ENCODE measurements at regions of chr20 and their contacts with region 1.

Region 1: DNA sequence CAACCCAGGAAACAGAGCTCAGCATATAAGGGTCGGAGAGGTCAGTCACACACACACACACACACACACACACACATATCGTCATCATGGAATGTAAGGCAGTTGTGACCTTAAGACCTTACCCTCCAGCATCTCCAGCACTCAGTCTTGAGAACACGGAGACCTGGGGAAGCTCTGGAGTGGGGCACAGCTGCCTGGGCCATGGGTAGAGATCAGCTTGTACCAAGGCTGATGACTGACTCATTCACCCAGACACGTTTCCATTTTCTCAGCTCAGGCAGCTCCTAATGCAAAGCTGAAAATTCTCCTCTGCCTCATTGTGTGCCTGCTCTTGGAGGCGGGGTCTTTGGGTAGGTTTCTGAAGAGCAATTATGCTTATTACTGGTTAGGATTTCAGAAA is 38.3 kb upstream of the PDYN start:
- DNase-seq: no peak

Region 2: DNA sequence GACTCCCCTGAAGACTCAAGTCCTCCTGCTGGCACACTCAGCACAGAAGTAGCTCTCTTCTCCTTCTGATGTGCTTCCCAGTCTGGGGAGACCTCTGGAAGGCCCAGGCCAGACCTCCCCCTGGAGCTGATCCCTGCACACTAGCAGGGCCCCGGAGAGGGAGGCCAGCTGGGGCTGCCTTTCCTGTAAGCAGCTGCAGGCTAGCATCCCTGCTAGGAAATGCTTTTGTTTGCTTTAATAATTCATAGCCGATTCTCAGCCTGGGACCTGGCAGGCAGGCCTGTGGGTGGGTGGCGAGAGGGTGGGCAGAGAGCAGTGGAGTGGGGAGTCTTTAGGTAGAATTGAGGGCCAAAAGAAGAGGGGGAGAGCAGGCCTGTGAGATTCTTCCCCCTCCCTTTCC is 665.6 kb after region 1 on chr20:
- CTCF ChIA-PET with region 1: interaction called, 13 read pairs
- POLR2A ChIA-PET with region 1: no interaction called
- DNase-seq: no peak